Esophagus muscularis mucosa (tissue), 4 donors: ENCODE measurements at regions of chr7 and their contacts with region 1.

Region 1: GRCh38 chr7:72785166-72785955 is 42.6 kb downstream of the TYW1B start:
- DNase-seq: no peak
- H3K4me3 ChIP-seq: no peak overlapping the region
- H3K27ac ChIP-seq: no peak overlapping the region
- H3K4me1 ChIP-seq: peaks cover 10 to 12% (median 12%) of the 10 kb centered on the region in 4 donors
- H3K27me3 ChIP-seq: no peaks in the 10 kb centered on the region
- CTCF ChIP-seq: no peak
- EP300 ChIP-seq: no peak
- POLR2A ChIP-seq: no peak

Region 2: GRCh38 chr7:71752171-71752935 is 1033.0 kb before region 1 on chr7:
- intact Hi-C with region 1: loop called (anchors 10 kb)
- DNase-seq: peak; percentile 86
- H3K4me3 ChIP-seq: peak overlapping the region in 1 of 4 donors; percentile 13
- H3K27ac ChIP-seq: no peak overlapping the region
- H3K4me1 ChIP-seq: peaks cover 0 to 9% (median 7%) of the 10 kb centered on the region in 4 donors
- H3K27me3 ChIP-seq: peaks cover 0 to 47% (median 6%) of the 10 kb centered on the region in 4 donors
- CTCF ChIP-seq: peak; percentile 28 to 65 (median 56)
- EP300 ChIP-seq: no peak
- POLR2A ChIP-seq: no peak